ENCODE measurements at regions of chr4 and their contacts with region 1.

Region 1: DNA sequence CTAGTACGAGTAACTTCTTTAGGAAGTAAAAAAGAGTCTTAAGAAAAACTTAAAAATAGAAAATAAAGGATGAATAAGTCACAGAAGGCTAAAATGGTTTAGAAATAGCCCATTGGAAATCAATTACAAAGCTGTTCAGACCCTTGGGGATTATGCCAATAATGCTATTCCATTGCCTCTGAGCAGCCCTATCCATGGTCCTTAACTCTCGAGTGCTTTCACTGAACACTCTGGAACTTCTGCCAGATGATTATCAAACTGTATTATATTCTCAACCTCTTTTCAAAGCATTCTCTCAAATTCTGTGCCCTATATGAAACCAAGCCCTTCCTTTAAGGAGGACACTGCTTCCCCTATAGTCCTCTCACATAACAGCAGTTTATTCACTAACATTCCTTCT is 17.0 kb downstream of the SLC9B1 start:
- DNase-seq: no peak
- ATAC-seq: no peak
- H3K4me3 ChIP-seq: no peak overlapping the region
- H3K27ac ChIP-seq: no peak overlapping the region
- H3K4me1 ChIP-seq: no peaks in the 10 kb centered on the region
- H3K27me3 ChIP-seq: no peaks in the 10 kb centered on the region
- CTCF ChIP-seq: no peak

Region 2: DNA sequence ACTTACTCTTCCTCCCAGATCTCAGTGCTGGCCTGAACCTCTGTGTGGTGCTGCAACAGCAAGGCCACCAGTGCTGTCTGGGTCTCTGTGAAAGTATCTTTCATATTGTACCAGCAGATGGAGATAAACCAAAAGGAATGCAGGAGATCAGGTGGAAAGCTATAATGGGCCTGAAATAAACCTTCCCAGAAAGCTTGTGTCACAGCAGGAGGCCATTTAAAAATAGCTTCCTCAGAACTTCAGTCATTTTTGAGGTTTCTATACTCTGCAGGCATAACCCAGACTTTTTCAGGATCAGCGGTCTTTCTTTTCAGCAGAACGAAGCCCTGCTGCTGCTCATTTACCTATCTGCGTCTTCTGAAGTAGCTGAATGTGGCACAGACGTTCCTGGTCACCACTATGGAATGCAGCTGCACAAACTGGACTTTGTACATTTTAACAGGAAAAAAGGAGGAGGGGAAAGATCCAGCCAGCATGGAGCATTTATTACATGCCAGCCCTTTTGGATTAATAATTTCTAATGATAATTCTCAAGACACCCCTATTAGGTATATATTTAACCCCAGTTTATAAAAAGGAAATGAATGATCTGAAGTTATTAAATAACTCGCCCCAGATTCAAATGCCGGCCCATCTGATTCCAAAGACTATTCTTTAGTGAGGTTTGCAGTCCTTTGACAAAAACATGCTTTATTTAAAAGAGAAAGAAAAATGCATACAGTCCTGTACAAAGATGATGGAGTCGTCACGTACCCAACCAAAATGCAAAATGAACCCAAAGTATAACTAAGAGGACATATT is 381.7 kb before region 1 on chr4:
- intact Hi-C with region 1: loop called in 1 of 2 experiments (anchors 2 kb)
- DNase-seq: no peak
- ATAC-seq: peak; percentile 92 to 96 (median 93)
- H3K4me3 ChIP-seq: peak overlapping the region; percentile 16
- H3K27ac ChIP-seq: no peak overlapping the region
- H3K4me1 ChIP-seq: peaks cover 8% of the 10 kb centered on the region
- H3K27me3 ChIP-seq: no peaks in the 10 kb centered on the region
- CTCF ChIP-seq: peak; percentile 62

Measured in psoas muscle (tissue), 8 donors.